ENCODE measurements at regions of chr19 and their contacts with region 1.

Region 1: GRCh38 chr19:57769345-57770131 is at the start of gene ZNF586:
- DNase-seq: peak; percentile 90 to 92
- H3K4me3 ChIP-seq: peak within 1 kb of the TSS in 2 of 3 donors; percentile 66 to 97
- H3K27ac ChIP-seq: peak within 1 kb of the TSS; percentile 53 to 82 (median 57)
- H3K4me1 ChIP-seq: peaks cover 7 to 17% of the 10 kb centered on the region in 2 donors
- H3K27me3 ChIP-seq: no peaks in the 10 kb centered on the region
- CTCF ChIP-seq: no peak
- POLR2A ChIP-seq: peak in 1 of 2 donors; percentile 64
- total RNA-seq, gene ZNF586: 23.8 to 30.5 (median 27.5) TPM

Region 2: GRCh38 chr19:57746580-57747471 is 22.7 kb before region 1 on chr19 and contains the start of gene ZNF776:
- intact Hi-C with region 1: loop called (anchors 2 kb)
- DNase-seq: peak; percentile 84 to 87
- H3K4me3 ChIP-seq: peak within 1 kb of the TSS; percentile 63 to 95 (median 68)
- H3K27ac ChIP-seq: peak within 1 kb of the TSS; percentile 49 to 85 (median 74)
- H3K4me1 ChIP-seq: peaks cover 13 to 23% of the 10 kb centered on the region in 2 donors
- H3K27me3 ChIP-seq: no peaks in the 10 kb centered on the region
- CTCF ChIP-seq: no peak
- POLR2A ChIP-seq: peak in 1 of 2 donors; percentile 59
- total RNA-seq, gene ZNF776: 17.6 to 24.4 (median 22.4) TPM

Region 3: GRCh38 chr19:57819475-57820148 is 50.1 kb after region 1 on chr19:
- intact Hi-C with region 1: loop called (anchors 10 kb)
- DNase-seq: peak; percentile 86
- H3K4me3 ChIP-seq: peak overlapping the region; percentile 45 to 79 (median 51)
- H3K27ac ChIP-seq: peak overlapping the region; percentile 50 to 66 (median 60)
- H3K4me1 ChIP-seq: peaks cover 0 to 18% of the 10 kb centered on the region in 2 donors
- H3K27me3 ChIP-seq: no peaks in the 10 kb centered on the region
- CTCF ChIP-seq: no peak
- POLR2A ChIP-seq: peak in 1 of 2 donors; percentile 60

Region 4: DNA sequence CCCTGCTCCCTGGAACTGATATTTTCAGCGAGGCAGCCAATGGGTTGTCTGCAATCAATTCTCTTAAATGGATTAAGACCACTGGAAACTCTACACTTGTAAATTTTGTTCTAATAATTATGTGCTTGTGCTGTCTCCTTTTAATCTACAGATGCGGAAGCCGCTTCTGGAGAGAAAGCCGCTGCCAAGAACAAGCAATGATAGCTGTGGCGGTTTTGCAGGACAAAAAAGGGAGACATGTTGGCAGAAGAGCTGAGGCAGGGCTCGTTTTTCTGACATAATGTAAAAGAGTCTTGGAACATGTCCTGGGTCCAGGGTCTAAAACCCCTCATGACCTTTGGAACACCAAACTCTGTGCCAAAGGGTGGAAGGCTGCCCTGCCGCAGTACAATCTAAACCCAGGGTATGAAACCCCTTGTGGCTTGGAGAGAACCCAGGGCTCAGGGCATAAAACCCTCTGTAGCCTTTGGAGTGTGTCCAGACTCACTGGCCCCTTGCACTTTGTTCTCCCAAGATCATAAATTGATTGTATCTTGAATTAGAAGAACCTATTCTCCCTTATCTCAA is 134.2 kb after region 1 on chr19:
- intact Hi-C with region 1: no loop called
- DNase-seq: no peak
- H3K4me3 ChIP-seq: no peak overlapping the region
- H3K27ac ChIP-seq: no peak overlapping the region
- H3K4me1 ChIP-seq: no peaks in the 10 kb centered on the region
- H3K27me3 ChIP-seq: no peaks in the 10 kb centered on the region
- CTCF ChIP-seq: no peak
- POLR2A ChIP-seq: no peak

Measured in thyroid gland (tissue), 4 donors.